Vagina (tissue), 2 donors: ENCODE measurements at regions of chr10 and their contacts with region 1.

Region 1: GRCh38 chr10:132023092-132023811 is 41.5 kb upstream of the BNIP3 start:
- DNase-seq: no peak
- H3K4me3 ChIP-seq: peak overlapping the region; percentile 10 to 36
- H3K27ac ChIP-seq: no peak overlapping the region
- H3K4me1 ChIP-seq: peaks cover 6% of the 10 kb centered on the region
- H3K27me3 ChIP-seq: no peaks in the 10 kb centered on the region
- CTCF ChIP-seq: peak; percentile 67 to 95 (median 85)
- POLR2A ChIP-seq: no peak

Region 2: GRCh38 chr10:130227883-130228282 is 1795.4 kb before region 1 on chr10:
- intact Hi-C with region 1: loop called (anchors 5 kb)
- DNase-seq: peak; percentile 6 to 31
- H3K4me3 ChIP-seq: no peak overlapping the region
- H3K27ac ChIP-seq: no peak overlapping the region
- H3K4me1 ChIP-seq: no peaks in the 10 kb centered on the region
- H3K27me3 ChIP-seq: no peaks in the 10 kb centered on the region
- CTCF ChIP-seq: no peak
- POLR2A ChIP-seq: no peak

Region 3: GRCh38 chr10:131885391-131886161 is 137.7 kb before region 1 on chr10:
- intact Hi-C with region 1: loop called (anchors 5 kb)
- DNase-seq: no peak
- H3K4me3 ChIP-seq: no peak overlapping the region
- H3K27ac ChIP-seq: no peak overlapping the region
- H3K4me1 ChIP-seq: no peaks in the 10 kb centered on the region
- H3K27me3 ChIP-seq: no peaks in the 10 kb centered on the region
- CTCF ChIP-seq: peak; percentile 85 to 96 (median 93)
- POLR2A ChIP-seq: no peak